MCF 10A (cell line): ENCODE measurements at regions of chr10 and their contacts with region 1.

Region 1: GRCh38 chr10:44932517-44933450 is 21.6 kb downstream of the TMEM72 start:
- DNase-seq: peak; percentile 75
- H3K4me3 Mint-ChIP-seq: no peak overlapping the region
- H3K27ac Mint-ChIP-seq: no peak overlapping the region
- H3K4me1 Mint-ChIP-seq: peaks cover 6% of the 10 kb centered on the region
- H3K27me3 Mint-ChIP-seq: peaks cover 18% of the 10 kb centered on the region
- CTCF ChIP-seq: peak; percentile 96

Region 2: DNA sequence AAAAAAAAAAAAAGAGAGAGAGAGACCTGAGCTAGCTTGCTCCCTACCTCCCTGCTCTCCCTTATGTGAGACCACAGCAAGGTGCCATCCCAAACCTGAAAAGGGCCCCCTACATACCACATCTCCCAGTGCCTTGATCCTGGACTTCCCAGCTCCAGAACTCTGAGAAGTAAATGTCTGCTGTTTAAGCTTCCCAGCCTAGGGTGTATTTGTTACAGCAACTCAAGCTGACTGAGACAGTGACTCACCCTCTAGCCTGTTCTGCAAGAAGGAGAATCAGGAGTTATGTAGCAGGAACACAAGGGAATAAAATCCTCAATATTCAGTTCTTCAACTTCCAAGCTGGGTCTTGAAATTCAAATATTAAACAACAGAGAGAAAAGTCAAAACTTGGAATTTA is 73.8 kb before region 1 on chr10:
- CTCF ChIA-PET with region 1: no interaction called
- POLR2A ChIA-PET with region 1: no interaction called
- intact Hi-C with region 1: no loop called
- DNase-seq: no peak
- H3K4me3 Mint-ChIP-seq: no peak overlapping the region
- H3K27ac Mint-ChIP-seq: no peak overlapping the region
- H3K4me1 Mint-ChIP-seq: no peaks in the 10 kb centered on the region
- H3K27me3 Mint-ChIP-seq: no peaks in the 10 kb centered on the region
- CTCF ChIP-seq: no peak

Region 3: GRCh38 chr10:44947371-44948152 is 14.8 kb after region 1 on chr10:
- CTCF ChIA-PET with region 1: interaction called, 28 read pairs
- POLR2A ChIA-PET with region 1: no interaction called
- intact Hi-C with region 1: no loop called
- DNase-seq: no peak
- H3K4me3 Mint-ChIP-seq: no peak overlapping the region
- H3K27ac Mint-ChIP-seq: no peak overlapping the region
- H3K4me1 Mint-ChIP-seq: no peaks in the 10 kb centered on the region
- H3K27me3 Mint-ChIP-seq: no peaks in the 10 kb centered on the region
- CTCF ChIP-seq: no peak

Region 4: DNA sequence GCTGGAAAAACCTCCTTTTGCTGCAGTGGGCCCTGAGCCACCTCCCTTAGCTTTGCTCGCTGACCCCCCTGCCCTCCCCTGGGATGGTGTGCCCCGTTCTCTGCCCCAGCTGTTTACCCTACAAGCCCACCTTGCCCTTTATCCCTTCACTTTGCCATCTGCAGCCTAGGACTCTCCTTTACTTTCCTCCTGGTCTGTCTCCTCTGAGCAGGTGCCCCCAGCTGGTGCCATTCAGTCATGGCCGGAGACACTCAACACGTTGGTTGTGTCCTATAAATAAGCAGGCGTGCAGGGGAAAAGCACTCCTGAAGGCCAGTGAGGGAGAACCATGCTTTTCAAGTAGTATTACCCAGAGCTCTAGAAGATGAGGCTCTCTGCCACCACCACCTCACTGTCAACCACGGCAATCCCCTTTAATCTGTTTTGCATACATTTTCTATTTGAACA is 32.9 kb after region 1 on chr10:
- CTCF ChIA-PET with region 1: interaction called, 16 read pairs
- POLR2A ChIA-PET with region 1: interaction called, 3 read pairs
- intact Hi-C with region 1: no loop called
- DNase-seq: no peak
- H3K4me3 Mint-ChIP-seq: no peak overlapping the region
- H3K27ac Mint-ChIP-seq: no peak overlapping the region
- H3K4me1 Mint-ChIP-seq: peaks cover 18% of the 10 kb centered on the region
- H3K27me3 Mint-ChIP-seq: no peaks in the 10 kb centered on the region
- CTCF ChIP-seq: no peak

Region 5: DNA sequence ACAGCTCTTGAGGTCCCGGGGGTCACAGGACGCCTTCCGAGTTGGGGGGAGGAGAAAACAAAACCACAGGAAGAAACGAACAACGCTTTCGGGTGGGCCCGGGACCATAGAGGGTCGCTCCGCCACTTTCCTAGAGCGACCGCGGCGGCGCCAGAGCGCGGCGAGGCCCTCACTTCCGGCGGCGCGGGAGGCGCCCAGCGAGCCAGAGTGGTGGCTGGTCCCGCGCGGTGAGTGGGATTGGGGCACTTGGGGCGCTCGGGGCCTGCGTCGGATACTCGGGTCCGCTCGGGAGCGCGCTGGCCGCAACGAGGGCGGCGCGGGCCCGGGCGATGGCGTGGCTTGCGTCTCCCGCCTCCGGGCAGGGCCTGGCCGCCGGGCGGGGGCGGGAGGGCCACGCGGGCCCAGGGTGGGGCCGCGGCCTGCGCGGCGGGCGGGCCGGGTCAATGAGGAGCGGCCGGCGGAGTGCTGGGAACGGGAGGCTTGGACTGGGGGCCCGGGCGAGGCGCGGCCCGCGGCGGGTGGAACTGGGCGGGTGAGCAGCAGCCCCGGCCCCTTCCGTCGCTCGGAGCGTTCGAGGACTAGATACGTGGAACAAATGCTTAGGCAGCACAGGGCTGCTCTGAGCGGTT is 68.1 kb after region 1 on chr10 and contains the start of gene ZNF22:
- CTCF ChIA-PET with region 1: interaction called, 6 read pairs
- POLR2A ChIA-PET with region 1: no interaction called
- intact Hi-C with region 1: loop called (anchors 2 kb)
- DNase-seq: peak; percentile 42
- H3K4me3 Mint-ChIP-seq: peak within 1 kb of the TSS; percentile 76
- H3K27ac Mint-ChIP-seq: peak within 1 kb of the TSS; percentile 67
- H3K4me1 Mint-ChIP-seq: peaks cover 26% of the 10 kb centered on the region
- H3K27me3 Mint-ChIP-seq: no peaks in the 10 kb centered on the region
- CTCF ChIP-seq: no peak
- total RNA-seq, gene ZNF22: 7.2 and 8.5 TPM in 2 replicates